ENCODE measurements at regions of chr6 and their contacts with region 1.

Region 1: GRCh38 chr6:97465877-97466561 is 183.0 kb upstream of the MMS22L start:
- DNase-seq: peak; percentile 93
- H3K4me3 ChIP-seq: peak overlapping the region; percentile 5
- H3K27ac ChIP-seq: peak overlapping the region; percentile 94
- H3K4me1 ChIP-seq: peaks cover 94% of the 10 kb centered on the region
- H3K27me3 ChIP-seq: no peaks in the 10 kb centered on the region
- CTCF ChIP-seq: peak; percentile 60

Region 2: DNA sequence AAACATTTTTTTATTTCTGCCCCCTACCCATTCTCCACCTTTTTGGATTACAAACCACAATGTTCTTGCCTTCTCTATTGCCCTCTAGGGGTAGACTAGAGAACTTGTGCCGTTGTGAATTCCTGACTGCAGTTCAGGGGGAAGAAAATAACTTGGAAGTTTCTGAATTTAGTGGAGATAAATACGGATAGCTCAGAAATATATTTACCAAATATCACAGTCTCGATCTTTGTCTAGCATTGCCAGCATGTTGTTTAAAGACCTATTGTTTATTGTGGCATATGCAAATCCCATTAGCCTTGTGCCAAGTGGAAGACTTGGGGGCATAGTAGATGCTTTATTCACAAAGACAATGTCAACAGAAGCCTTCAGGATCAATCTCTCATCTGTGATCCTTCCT is 28.9 kb before region 1 on chr6:
- CTCF ChIA-PET with region 1: interaction called, 4 read pairs
- POLR2A ChIA-PET with region 1: interaction called, 3 read pairs
- intact Hi-C with region 1: loop called (anchors 2 kb)
- DNase-seq: peak; percentile 71
- H3K4me3 ChIP-seq: no peak overlapping the region
- H3K27ac ChIP-seq: no peak overlapping the region
- H3K4me1 ChIP-seq: peaks cover 18% of the 10 kb centered on the region
- H3K27me3 ChIP-seq: no peaks in the 10 kb centered on the region
- CTCF ChIP-seq: peak; percentile 80

Region 3: DNA sequence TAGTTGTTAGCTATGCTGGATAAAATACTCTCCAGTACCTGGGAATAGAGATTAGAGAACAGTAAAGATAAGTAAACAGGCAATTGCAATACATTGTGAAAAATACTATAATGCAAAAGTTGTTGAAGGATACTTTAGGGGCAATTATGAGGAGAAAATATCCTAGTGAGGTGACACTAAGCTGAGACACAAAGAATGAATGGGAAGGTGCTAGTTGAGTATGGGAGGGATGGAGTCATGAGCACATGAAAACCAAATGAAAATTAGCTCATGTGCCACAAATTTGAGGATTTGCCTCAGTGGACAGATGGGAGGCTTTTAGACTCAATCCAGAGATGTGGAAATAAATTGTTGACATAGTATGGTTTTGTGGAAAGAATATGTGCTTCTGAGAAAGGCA is 187.5 kb after region 1 on chr6:
- CTCF ChIA-PET with region 1: interaction called, 3 read pairs
- POLR2A ChIA-PET with region 1: interaction called, 10 read pairs
- intact Hi-C with region 1: loop called (anchors 1 kb)
- DNase-seq: peak; percentile 86
- H3K4me3 ChIP-seq: no peak overlapping the region
- H3K27ac ChIP-seq: peak overlapping the region; percentile 84
- H3K4me1 ChIP-seq: peaks cover 30% of the 10 kb centered on the region
- H3K27me3 ChIP-seq: no peaks in the 10 kb centered on the region
- CTCF ChIP-seq: no peak

Region 4: GRCh38 chr6:97674802-97675201 is 208.8 kb after region 1 on chr6:
- CTCF ChIA-PET with region 1: no interaction called
- POLR2A ChIA-PET with region 1: no interaction called
- intact Hi-C with region 1: no loop called
- DNase-seq: no peak
- H3K4me3 ChIP-seq: no peak overlapping the region
- H3K27ac ChIP-seq: no peak overlapping the region
- H3K4me1 ChIP-seq: peaks cover 14% of the 10 kb centered on the region
- H3K27me3 ChIP-seq: no peaks in the 10 kb centered on the region
- CTCF ChIP-seq: no peak

Region 5: GRCh38 chr6:97726378-97726777 is 260.4 kb after region 1 on chr6:
- CTCF ChIA-PET with region 1: interaction called, 12 read pairs
- POLR2A ChIA-PET with region 1: no interaction called
- intact Hi-C with region 1: no loop called
- DNase-seq: no peak
- H3K4me3 ChIP-seq: no peak overlapping the region
- H3K27ac ChIP-seq: no peak overlapping the region
- H3K4me1 ChIP-seq: peaks cover 11% of the 10 kb centered on the region
- H3K27me3 ChIP-seq: no peaks in the 10 kb centered on the region
- CTCF ChIP-seq: peak; percentile 41

Region 6: DNA sequence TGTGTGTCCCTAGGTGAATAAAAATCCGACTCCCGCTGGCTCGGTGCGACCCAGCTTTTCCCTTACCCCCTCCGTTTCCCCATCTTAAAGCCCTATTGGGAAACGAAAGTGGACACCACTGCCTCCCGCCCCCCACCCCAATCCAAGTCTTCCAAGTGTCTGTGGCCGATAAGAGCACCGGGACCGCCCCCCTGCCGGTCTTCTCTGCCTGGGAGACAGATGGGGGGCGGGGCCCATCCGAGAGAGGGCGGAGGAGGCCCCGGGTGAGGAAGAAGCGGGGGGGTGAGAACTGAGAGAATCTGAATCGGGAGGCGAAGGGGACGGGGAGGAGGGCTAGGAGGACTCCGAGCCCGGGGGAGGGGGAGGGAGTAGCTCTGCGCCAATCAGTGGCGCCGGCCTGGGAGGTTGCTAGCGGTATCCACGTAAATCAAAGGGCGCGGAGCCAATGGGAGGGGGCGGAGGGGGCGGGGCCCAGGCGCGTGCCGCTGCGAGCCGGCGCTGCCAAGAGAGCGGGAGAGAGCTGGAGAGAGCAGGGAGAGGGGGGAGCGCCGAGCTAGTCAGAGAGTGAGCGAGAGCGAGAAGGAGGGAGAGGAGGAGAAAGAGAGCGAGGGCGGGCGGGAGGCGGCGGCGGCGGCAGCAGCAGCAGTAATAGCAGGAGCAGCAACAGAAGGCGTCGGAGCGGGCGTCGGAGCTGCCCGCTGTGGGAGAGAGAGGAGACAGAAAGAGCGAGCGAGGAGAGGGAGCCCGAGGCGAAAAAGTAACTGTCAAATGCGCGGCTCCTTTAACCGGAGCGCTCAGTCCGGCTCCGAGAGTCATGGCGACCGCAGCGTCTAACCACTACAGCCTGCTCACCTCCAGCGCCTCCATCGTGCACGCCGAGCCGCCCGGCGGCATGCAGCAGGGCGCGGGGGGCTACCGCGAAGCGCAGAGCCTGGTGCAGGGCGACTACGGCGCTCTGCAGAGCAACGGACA is 1368.3 kb after region 1 on chr6 and contains the start of gene POU3F2:
- CTCF ChIA-PET with region 1: no interaction called
- POLR2A ChIA-PET with region 1: no interaction called
- intact Hi-C with region 1: loop called (anchors 10 kb)
- DNase-seq: peak; percentile 99
- H3K4me3 ChIP-seq: peak within 1 kb of the TSS; percentile 91
- H3K27ac ChIP-seq: peak within 1 kb of the TSS; percentile 76
- H3K4me1 ChIP-seq: peaks cover 8% of the 10 kb centered on the region
- H3K27me3 ChIP-seq: no peaks in the 10 kb centered on the region
- CTCF ChIP-seq: no peak
- total RNA-seq, gene POU3F2: 22.8 and 25.5 TPM in 2 replicates

Measured in A673 (cell line).